H1 (cell line): ENCODE measurements at regions of chr5 and their contacts with region 1.

Region 1: DNA sequence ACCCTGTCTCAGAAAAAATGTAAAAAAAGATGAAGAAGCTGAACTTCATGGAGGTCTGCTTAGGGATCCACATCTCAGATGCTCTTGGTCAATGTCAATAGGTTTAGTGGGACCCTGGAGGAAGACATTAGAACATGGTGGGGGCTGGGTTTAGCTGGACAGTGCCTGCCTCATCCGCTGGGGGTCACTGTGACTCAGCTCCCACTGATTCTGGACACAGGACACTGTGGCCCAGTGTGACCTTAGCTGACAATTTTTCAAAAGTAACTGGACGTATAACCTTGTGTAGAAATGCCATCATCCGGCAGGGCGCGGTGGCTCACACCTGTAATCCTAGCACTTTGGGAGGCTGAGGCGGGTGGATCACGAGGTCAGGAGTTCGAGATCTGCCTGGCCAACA is 7.3 kb upstream of the HNRNPAB start:
- DNase-seq: peak in 1 of 2 experiments; percentile 67
- H3K4me3 ChIP-seq: no peak overlapping the region
- H3K27ac ChIP-seq: no peak overlapping the region
- H3K4me1 ChIP-seq: peaks cover 0 to 10% (median 3%) of the 10 kb centered on the region in 4 experiments; a peak in 3 of 7 replicates
- H3K27me3 ChIP-seq: no peaks in the 10 kb centered on the region; a peak in 1 of 7 replicates
- CTCF ChIP-seq: peak; percentile 49 to 89 (median 79)
- EP300 ChIP-seq: no peak
- POLR2A ChIP-seq: no peak
- RAD21 ChIP-seq: peak; percentile 15 to 53; a peak in 3 of 4 replicates

Region 2: GRCh38 chr5:178170995-178171394 is 26.0 kb before region 1 on chr5:
- CTCF ChIA-PET with region 1: interaction called, 16 read pairs
- POLR2A ChIA-PET with region 1: interaction called, 985 read pairs
- DNase-seq: no peak
- H3K4me3 ChIP-seq: no peak overlapping the region
- H3K27ac ChIP-seq: no peak overlapping the region
- H3K4me1 ChIP-seq: peaks cover 0 to 12% (median 1%) of the 10 kb centered on the region in 4 experiments; a peak in 1 of 7 replicates
- H3K27me3 ChIP-seq: no peaks in the 10 kb centered on the region
- CTCF ChIP-seq: no peak
- EP300 ChIP-seq: no peak
- POLR2A ChIP-seq: no peak
- RAD21 ChIP-seq: no peak

Region 3: GRCh38 chr5:178223828-178224335 is 26.9 kb after region 1 on chr5:
- CTCF ChIA-PET with region 1: interaction called, 10 read pairs
- POLR2A ChIA-PET with region 1: interaction called, 6 read pairs
- DNase-seq: no peak
- H3K4me3 ChIP-seq: no peak overlapping the region; a peak in 2 of 8 replicates
- H3K27ac ChIP-seq: no peak overlapping the region
- H3K4me1 ChIP-seq: peaks cover 0 to 15% (median 9%) of the 10 kb centered on the region in 4 experiments; a peak in 6 of 7 replicates
- H3K27me3 ChIP-seq: no peaks in the 10 kb centered on the region
- CTCF ChIP-seq: no peak
- EP300 ChIP-seq: no peak
- POLR2A ChIP-seq: no peak
- RAD21 ChIP-seq: peak in 1 of 2 experiments; percentile 11; a peak in 2 of 4 replicates

Region 4: DNA sequence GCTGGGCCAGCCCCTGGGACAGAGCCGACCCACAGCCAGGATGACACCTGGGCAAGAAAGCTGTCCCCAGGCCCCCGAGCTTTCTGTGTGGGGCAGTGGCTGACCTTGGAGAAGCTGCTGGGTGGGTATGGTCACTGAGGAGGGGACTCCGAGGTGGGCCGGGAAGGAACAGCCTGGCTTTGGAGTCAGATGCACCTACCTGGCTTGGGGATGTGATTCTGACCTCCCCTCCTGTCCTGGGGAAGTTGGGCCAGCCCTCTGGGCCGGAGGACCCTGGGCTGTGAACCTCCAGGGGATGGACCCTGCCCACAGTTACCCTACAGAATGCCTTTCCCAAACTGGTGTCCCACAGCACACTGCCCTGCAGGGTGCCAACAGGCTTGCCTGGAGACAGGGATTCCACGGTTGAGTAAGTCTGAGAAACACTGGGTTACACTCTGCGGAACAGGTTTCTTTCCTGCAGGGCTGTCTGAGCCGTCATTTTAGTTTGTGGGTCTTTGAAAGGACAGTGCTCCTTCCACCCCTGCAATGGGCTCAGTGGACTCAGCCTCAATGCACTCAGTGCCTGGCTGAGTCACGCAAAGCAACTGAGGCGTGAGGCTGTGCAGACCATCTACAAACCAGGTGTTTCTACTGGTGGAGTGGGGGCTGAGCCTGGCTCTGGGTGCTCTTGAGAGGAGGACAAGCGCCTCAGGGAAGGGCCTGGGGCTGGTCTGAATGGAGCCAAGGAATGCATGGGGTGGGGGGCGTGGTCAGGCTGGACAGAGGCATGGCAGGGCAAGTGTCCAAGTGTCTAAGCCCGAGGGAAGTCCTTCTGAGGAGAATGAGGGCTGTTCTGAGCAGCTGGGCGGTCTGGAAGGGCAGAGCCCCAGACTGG is 76.9 kb after region 1 on chr5:
- CTCF ChIA-PET with region 1: no interaction called
- POLR2A ChIA-PET with region 1: no interaction called
- DNase-seq: no peak
- H3K4me3 ChIP-seq: no peak overlapping the region
- H3K27ac ChIP-seq: no peak overlapping the region
- H3K4me1 ChIP-seq: no peaks in the 10 kb centered on the region
- H3K27me3 ChIP-seq: peaks cover 0 to 4% (median 2%) of the 10 kb centered on the region in 4 experiments; a peak in 4 of 7 replicates
- CTCF ChIP-seq: no peak
- EP300 ChIP-seq: no peak
- POLR2A ChIP-seq: no peak
- RAD21 ChIP-seq: no peak